ENCODE measurements at regions of chr17 and their contacts with region 1.

Region 1: DNA sequence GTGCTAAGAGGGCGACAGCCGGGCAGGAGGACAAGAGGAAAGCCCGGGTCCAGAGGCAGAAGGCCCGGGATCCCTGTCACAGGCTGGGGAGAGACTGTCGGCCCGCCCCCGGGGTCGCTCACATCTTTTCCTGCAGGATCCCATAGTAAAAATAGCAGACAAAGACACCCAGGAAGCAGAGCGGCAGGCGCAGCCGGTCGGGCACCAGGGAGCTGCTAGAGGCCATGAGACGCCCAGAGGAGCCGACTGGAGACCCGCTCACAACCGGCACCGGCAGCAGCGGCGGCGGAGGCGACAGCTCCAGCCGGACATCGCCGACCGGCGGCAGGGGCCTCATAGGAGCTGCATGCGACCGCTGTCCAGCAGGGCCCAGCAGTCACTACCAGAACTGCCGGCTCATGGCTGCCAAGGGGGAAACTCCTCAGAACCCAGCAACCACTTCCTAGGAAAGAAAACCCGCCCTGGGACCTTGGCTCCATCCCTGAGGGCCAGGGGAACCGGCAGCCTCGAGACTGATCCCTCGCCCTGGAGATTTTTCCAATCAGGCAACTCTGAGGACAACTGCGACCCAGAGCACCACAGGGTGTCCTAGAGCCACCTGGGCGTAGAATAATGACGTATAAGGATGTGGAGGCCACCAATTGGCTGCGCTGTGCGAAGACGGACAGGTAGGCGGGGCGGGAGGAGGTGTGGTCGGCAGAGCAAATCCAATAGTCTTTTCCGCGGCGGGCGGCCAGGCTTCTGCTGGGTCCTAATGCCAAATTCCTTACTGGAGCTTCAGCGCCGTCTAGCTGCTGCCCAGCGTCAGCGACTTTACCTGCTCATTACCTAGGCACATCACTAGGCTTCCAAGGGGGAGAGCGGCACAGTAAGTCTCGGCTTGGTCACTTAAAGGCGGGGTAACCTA is at the start of gene SLC35B1:
- DNase-seq: peak; percentile 98 to 100
- ATAC-seq: peak; percentile 99 to 100 (median 99)
- H3K4me3 ChIP-seq: peak within 1 kb of the TSS; percentile 75 to 99 (median 87)
- H3K27ac ChIP-seq: peak within 1 kb of the TSS; percentile 91 to 97 (median 96)
- H3K4me1 ChIP-seq: peaks cover 6 to 46% (median 25%) of the 10 kb centered on the region in 9 donors
- H3K27me3 ChIP-seq: no peaks in the 10 kb centered on the region
- CTCF ChIP-seq: peak; percentile 49 to 89 (median 69)
- total RNA-seq, gene SLC35B1: 60.5 to 92.4 (median 69.1) TPM

Region 2: GRCh38 chr17:49407981-49408501 is 299.8 kb before region 1 on chr17:
- intact Hi-C with region 1: loop called in 1 of 10 experiments (anchors 10 kb)
- DNase-seq: peak; percentile 53 to 68
- ATAC-seq: peak; percentile 62 to 83 (median 74)
- H3K4me3 ChIP-seq: no peak overlapping the region
- H3K27ac ChIP-seq: no peak overlapping the region
- H3K4me1 ChIP-seq: peaks cover 0 to 13% (median 6%) of the 10 kb centered on the region in 9 donors
- H3K27me3 ChIP-seq: no peaks in the 10 kb centered on the region
- CTCF ChIP-seq: peak; percentile 37 to 78 (median 66)

Region 3: DNA sequence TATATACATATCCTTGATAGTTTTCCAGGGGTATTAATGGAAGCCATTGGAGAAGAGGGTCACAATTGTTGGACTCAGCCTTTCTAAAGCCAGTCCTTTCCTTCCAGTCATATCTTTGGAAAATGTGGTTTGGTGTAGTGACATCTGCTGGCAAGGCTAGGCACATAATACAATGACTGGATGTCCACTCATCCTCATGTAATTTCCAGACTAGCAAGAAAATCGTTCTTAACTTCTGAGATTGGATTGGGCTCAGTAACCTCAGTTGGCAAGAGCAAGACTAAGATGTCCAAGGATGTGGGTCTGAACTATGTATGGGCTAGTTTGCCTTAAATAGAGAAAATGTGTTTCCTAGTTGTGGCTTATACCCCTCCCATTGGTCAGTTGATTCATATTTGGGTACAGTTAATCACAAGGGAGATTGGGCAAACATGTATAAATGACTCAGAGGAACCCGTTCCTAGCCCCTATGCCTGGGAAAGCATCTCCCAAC is 71.9 kb after region 1 on chr17:
- intact Hi-C with region 1: loop called in 8 of 10 experiments (anchors 1 to 5 kb)
- DNase-seq: peak in 1 of 2 donors; percentile 42
- ATAC-seq: peak; percentile 19 to 68 (median 64)
- H3K4me3 ChIP-seq: no peak overlapping the region
- H3K27ac ChIP-seq: peak overlapping the region in 3 of 10 donors; percentile 17 to 60 (median 17)
- H3K4me1 ChIP-seq: peaks cover 4 to 68% (median 46%) of the 10 kb centered on the region in 9 donors
- H3K27me3 ChIP-seq: no peaks in the 10 kb centered on the region
- CTCF ChIP-seq: peak in 8 of 9 donors; percentile 31 to 78 (median 64)

Region 4: DNA sequence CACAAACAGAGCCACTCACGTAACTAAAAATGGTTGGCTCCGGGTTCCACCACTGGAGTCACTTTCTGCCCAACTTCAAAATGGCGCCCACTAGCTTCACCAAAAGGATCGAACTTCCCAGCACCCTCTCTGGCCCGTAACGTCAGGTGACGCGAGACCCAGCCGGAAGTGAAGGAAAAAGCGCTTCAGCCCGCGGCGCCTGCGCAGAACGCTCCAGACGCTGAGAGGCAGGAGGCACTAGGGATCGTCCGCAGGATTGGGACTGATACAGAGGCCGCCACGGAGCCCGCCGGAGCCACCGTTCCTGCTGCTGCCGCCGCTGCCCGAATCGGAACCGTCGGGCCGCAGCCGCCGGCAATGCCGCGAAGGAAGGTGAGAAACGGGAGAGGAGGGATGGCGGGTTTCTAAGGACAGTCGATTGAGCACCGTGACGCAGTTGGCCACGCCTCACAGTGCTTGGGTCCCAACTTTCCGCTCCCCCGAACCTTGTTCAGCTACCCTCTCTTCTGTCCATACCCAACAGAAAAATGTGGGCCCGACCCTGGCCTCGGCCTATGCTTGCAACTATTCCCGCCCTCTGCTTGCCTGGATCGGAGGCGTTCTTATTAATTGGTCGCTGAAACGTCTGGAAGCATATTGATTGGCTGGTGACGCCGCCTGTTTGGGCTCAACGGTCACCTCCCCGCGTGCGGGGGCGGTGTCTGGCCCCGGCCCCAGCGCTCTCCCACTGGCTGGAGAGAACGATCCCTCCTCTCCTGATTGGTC is 80.8 kb after region 1 on chr17 and contains the start of gene KAT7:
- intact Hi-C with region 1: loop called in 3 of 10 experiments (anchors 2 to 5 kb)
- DNase-seq: peak; percentile 99
- ATAC-seq: peak; percentile 95 to 97 (median 96)
- H3K4me3 ChIP-seq: peak within 1 kb of the TSS; percentile 77 to 100 (median 94)
- H3K27ac ChIP-seq: peak within 1 kb of the TSS; percentile 88 to 100 (median 98)
- H3K4me1 ChIP-seq: peaks cover 6 to 67% (median 57%) of the 10 kb centered on the region in 9 donors
- H3K27me3 ChIP-seq: no peaks in the 10 kb centered on the region
- CTCF ChIP-seq: peak in 1 of 9 donors; percentile 41
- total RNA-seq, gene KAT7: 48.9 to 81.3 (median 66.3) TPM

Region 5: DNA sequence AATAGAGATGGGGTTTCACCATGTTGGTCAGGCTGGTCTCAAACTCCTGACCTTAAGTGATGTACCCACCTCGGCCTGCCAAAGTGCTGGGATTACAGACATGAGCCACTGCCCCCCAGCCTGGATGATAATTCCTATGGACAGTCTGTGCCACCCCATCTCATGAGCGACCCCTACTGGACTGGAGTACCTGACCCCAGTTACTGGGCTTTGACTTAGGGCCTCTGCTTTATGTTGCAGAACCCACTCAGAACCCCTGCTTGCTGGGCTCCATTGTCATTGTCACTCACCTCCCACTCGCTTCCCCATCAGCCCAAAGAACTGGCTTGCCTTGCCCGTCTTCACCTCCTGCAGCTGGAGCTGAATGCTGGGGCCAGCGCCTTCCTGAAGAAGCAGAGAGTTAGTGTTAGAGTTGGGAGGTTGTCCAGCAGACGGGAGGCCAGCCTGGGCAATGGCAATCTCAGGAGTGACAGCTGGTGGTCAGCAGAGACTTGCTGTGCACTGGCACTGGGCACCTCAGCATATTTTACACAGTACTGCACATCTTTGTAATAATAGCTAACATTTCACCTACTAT is 136.0 kb after region 1 on chr17:
- intact Hi-C with region 1: loop called in 2 of 10 experiments (anchors 5 kb)
- DNase-seq: no peak
- ATAC-seq: no peak
- H3K4me3 ChIP-seq: no peak overlapping the region
- H3K27ac ChIP-seq: peak overlapping the region in 3 of 10 donors; percentile 85 to 91 (median 89)
- H3K4me1 ChIP-seq: peaks cover 8 to 44% (median 35%) of the 10 kb centered on the region in 9 donors
- H3K27me3 ChIP-seq: no peaks in the 10 kb centered on the region
- CTCF ChIP-seq: peak in 5 of 9 donors; percentile 14 to 34 (median 29)

Region 6: GRCh38 chr17:49851387-49852291 is 143.8 kb after region 1 on chr17:
- intact Hi-C with region 1: loop called in 9 of 10 experiments (anchors 5 to 10 kb)
- DNase-seq: peak; percentile 84
- ATAC-seq: peak; percentile 76 to 91 (median 86)
- H3K4me3 ChIP-seq: peak overlapping the region; percentile 38 to 76 (median 62)
- H3K27ac ChIP-seq: peak overlapping the region in 9 of 10 donors; percentile 8 to 75 (median 62)
- H3K4me1 ChIP-seq: peaks cover 3 to 25% (median 19%) of the 10 kb centered on the region in 9 donors
- H3K27me3 ChIP-seq: peaks cover 0 to 6% (median 0%) of the 10 kb centered on the region in 7 donors
- CTCF ChIP-seq: peak; percentile 43 to 86 (median 83)

Measured in heart right ventricle (tissue), 16 donors.